ENCODE measurements at regions of chr3 and their contacts with region 1.

Region 1: DNA sequence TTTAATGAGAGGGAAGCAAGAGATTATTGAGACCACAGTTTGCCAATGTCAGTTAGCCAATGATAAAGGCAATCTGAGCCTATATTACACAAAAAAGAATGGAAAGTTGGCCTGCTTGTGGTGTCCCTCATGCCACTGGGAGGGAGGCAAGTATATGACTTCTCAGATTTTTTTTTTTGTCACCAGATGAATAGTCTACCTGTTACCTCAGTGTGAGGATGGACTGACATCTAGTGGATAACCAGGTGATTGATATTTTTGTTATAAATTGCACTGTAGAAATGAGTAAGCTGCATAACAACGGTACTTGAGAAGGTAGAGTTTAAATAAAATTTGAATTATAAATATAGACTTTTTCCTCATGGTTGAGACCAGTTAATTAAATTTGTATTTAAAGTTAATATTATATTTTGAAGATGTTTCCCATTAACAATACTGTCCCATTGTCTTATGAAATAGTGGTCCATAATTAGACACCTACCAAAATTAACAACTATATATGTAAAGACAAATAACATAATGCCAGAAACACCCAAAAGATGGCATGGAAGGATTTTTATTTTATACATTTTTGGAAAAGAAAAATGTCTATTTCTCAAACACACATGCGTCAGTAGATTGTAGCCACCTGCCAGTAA is 237.8 kb upstream of the GADL1 start:
- DNase-seq: no peak
- ATAC-seq: peak; percentile 48 to 59
- H3K4me3 ChIP-seq: no peak overlapping the region
- H3K27ac ChIP-seq: no peak overlapping the region
- H3K4me1 ChIP-seq: no peaks in the 10 kb centered on the region
- H3K27me3 ChIP-seq: no peaks in the 10 kb centered on the region

Region 2: DNA sequence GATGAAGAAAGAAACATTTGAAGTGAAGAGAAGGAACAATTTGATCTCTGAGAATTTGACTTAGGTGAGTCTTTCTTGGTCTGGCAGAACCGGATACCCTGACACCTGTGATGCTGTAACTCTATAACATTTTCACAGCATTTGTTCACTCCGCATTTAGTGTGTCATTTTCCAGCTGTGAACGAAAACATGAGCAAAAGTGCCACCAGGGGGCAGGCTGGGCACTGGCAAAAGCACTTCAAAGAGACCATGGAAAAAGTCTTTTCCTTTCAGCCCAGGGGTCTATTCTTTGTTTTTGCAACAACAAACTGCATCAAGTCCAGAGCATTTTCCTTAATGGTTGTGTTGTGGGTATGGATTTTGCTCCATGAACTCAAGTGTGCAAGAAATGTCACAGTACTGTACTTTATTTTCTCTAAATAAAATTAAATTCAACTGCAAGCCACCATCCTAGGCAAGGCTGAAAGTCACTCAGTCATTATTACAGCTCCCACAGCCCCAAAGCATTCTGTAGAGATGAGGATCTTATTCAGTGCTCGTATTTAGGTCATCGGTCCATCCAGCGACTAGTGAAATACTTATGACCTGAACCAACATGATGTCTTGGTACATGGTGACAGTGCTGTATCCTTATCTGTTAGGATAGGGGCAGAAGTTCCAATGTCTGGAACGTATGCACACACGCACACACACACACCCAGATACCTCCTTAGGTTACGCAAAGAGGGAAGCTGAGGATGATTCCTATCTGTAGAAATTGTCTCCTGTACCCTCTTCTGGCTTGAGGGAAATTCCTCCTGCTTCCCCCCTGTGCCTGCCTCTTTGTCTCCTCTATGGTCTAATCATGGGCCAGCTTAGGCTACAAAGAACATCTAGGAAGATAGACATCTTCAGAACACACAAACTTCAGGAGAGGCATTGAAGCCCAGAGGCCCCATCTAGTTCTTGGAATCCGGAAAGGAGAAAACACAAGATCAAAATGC is 363.3 kb before region 1 on chr3:
- intact Hi-C with region 1: loop called (anchors 5 kb)
- DNase-seq: peak; percentile 78 to 93 (median 86)
- ATAC-seq: peak; percentile 16 to 23
- H3K4me3 ChIP-seq: no peak overlapping the region
- H3K27ac ChIP-seq: no peak overlapping the region
- H3K4me1 ChIP-seq: peaks cover 3% of the 10 kb centered on the region
- H3K27me3 ChIP-seq: no peaks in the 10 kb centered on the region

Region 3: GRCh38 chr3:30984855-30985749 is 147.1 kb before region 1 on chr3:
- intact Hi-C with region 1: no loop called
- DNase-seq: no peak
- ATAC-seq: no peak
- H3K4me3 ChIP-seq: no peak overlapping the region
- H3K27ac ChIP-seq: no peak overlapping the region
- H3K4me1 ChIP-seq: no peaks in the 10 kb centered on the region
- H3K27me3 ChIP-seq: peaks cover 3% of the 10 kb centered on the region